ENCODE measurements at regions of chr13 and their contacts with region 1.

Region 1: DNA sequence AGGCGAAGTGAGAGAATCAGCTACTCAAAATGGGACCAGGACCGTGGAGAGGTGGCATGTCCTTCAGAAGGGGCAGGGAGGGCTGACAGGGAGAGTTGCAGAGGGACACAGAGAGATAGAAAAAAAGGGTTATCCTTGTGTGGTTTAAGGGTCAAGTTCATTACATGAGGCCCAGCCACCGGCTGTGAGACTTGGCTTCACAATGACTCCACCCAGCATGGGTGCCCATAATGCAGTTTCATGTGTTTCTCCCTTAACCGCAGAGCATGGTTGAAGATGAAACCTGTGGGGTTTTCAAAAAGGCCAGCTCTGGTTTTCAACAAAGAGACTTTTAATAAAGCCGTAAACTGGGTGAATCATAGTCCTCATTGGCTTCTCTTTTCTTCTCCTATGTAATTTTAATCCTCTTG is 164.6 kb downstream of the KLF5 start:
- DNase-seq: peak; percentile 70
- H3K4me3 Mint-ChIP-seq: no peak overlapping the region
- H3K27ac Mint-ChIP-seq: no peak overlapping the region
- H3K4me1 Mint-ChIP-seq: peaks cover 24% of the 10 kb centered on the region
- H3K27me3 Mint-ChIP-seq: peaks cover 4% of the 10 kb centered on the region

Region 2: DNA sequence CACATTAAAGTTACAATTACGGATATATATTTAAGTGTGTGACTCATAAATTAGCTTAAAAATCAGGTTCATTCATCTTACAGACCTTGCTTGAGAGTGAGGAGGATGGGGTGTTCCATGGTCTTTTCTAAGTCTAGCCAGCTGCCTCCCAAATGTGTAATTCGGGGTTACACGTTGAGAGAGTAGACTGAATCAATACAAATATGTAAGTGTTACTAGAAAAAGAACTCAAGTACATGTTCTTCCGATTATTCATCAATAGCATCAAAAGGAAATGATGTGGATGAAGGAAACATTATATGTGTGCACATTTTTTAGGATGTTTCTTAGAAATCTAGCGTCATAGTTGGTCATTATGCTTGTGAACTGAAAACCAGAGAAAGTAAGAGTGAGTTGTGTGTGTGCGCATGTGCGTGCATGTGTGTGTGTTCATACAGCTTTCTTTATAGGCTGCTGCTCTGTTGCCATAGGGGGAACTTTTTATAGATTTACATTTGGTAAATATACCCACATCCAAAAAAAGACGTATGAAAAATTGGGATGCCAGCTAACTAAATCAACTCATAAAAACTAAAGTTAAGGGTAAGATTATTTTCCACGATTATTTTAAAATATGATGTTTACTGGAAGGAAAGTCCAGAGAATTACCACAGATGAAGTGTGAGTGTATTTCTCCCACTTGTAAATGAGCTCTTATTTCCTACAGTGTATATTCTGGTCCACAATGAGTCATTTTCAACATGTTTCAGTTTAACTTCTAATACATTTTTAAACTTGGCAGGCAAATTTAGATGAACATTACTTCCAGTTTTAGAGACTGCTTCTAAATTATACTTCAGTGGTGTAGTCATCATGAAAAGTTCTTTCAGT is 359.0 kb before region 1 on chr13:
- CTCF ChIA-PET with region 1: no interaction called
- POLR2A ChIA-PET with region 1: no interaction called
- intact Hi-C with region 1: loop called (anchors 2 kb)
- DNase-seq: peak; percentile 51
- H3K4me3 Mint-ChIP-seq: peak overlapping the region; percentile 17
- H3K27ac Mint-ChIP-seq: peak overlapping the region; percentile 83
- H3K4me1 Mint-ChIP-seq: peaks cover 20% of the 10 kb centered on the region
- H3K27me3 Mint-ChIP-seq: no peaks in the 10 kb centered on the region

Region 3: DNA sequence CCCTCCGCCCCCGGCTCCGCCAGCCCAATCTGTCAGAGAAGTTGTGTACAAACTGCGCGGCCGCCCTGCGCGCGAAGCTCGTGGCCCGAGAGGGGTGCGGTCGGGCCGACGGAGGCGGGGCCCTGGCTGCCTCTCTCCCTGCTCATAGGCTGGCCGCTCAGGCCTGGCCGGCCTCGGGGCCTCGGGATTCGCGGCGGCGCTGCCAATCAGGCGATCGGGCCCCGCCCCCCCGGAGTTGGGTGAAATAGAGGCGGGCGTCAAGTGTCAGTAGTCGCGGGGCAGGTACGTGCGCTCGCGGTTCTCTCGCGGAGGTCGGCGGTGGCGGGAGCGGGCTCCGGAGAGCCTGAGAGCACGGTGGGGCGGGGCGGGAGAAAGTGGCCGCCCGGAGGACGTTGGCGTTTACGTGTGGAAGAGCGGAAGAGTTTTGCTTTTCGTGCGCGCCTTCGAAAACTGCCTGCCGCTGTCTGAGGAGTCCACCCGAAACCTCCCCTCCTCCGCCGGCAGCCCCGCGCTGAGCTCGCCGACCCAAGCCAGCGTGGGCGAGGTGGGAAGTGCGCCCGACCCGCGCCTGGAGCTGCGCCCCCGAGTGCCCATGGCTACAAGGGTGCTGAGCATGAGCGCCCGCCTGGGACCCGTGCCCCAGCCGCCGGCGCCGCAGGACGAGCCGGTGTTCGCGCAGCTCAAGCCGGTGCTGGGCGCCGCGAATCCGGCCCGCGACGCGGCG is 164.5 kb before region 1 on chr13 and contains the start of gene KLF5:
- CTCF ChIA-PET with region 1: no interaction called
- POLR2A ChIA-PET with region 1: no interaction called
- intact Hi-C with region 1: loop called (anchors 1 kb)
- DNase-seq: peak; percentile 97
- H3K4me3 Mint-ChIP-seq: peak within 1 kb of the TSS; percentile 75
- H3K27ac Mint-ChIP-seq: no peak within 1 kb of the TSS
- H3K4me1 Mint-ChIP-seq: peaks cover 17% of the 10 kb centered on the region
- H3K27me3 Mint-ChIP-seq: peaks cover 16% of the 10 kb centered on the region
- total RNA-seq, gene KLF5: 3.3 to 4.2 TPM

Region 4: DNA sequence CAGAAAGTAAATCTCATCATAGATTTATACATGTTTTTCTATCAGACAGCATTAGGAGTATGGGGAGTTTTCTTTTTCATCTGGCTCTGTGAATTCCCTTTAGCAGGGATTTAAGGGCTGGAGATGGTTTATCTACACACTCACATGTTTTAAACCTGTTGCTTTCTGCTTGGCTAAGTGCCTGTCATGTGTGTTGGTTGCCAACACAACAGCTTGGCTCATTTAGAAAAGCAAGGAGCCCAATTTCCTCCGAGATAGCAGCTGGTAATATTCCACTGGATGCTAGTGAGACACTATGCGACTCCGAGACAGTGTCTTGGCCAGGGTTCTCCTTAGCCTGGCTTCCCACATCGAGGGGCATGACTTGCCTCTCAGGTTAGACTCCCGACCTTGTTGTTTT is 81.3 kb before region 1 on chr13:
- CTCF ChIA-PET with region 1: no interaction called
- POLR2A ChIA-PET with region 1: no interaction called
- intact Hi-C with region 1: no loop called
- DNase-seq: no peak
- H3K4me3 Mint-ChIP-seq: no peak overlapping the region
- H3K27ac Mint-ChIP-seq: no peak overlapping the region
- H3K4me1 Mint-ChIP-seq: no peaks in the 10 kb centered on the region
- H3K27me3 Mint-ChIP-seq: no peaks in the 10 kb centered on the region

Region 5: DNA sequence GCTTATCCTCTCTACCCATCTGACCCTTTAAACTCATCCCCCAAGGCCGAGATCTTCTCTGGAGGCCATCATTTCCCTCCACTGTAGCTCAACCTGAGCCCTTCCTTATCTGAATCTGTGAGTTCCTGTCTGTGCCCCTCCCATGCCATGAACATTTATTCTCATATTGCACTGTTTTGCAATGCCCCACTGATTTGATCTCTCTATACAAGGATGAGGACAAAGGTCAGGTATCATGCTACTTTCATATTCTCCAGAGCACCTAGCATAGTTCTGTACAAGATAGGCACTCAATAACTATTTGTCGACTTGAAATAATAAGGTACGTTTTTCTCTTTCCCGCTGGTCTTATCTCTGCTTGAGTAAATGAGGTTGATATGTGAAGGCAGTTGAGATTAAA is 29.1 kb before region 1 on chr13:
- CTCF ChIA-PET with region 1: no interaction called
- POLR2A ChIA-PET with region 1: no interaction called
- intact Hi-C with region 1: no loop called
- DNase-seq: no peak
- H3K4me3 Mint-ChIP-seq: no peak overlapping the region
- H3K27ac Mint-ChIP-seq: no peak overlapping the region
- H3K4me1 Mint-ChIP-seq: no peaks in the 10 kb centered on the region
- H3K27me3 Mint-ChIP-seq: peaks cover 12% of the 10 kb centered on the region

Region 6: DNA sequence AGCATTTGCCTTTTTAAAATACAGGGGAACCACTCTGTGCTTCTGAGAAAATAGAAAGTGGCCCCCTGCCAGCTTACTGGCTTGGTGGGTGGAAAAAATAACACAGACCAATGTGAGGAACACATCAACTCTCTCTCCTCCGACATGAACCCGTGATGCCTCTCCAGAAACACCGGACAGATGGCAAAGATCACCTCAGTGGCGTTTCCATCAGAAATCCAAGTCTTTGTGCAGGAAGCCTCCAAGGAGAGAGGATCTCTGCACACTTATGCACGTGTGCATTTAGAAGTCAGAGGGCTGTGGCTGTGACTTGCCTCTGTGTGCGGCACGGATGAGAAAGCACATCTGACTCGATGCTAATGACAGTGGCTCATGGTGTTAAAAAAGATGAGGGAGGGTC is 1023.1 kb after region 1 on chr13:
- CTCF ChIA-PET with region 1: no interaction called
- POLR2A ChIA-PET with region 1: no interaction called
- intact Hi-C with region 1: loop called (anchors 10 kb)
- DNase-seq: peak; percentile 47
- H3K4me3 Mint-ChIP-seq: peak overlapping the region; percentile 58
- H3K27ac Mint-ChIP-seq: peak overlapping the region; percentile 40
- H3K4me1 Mint-ChIP-seq: peaks cover 95% of the 10 kb centered on the region
- H3K27me3 Mint-ChIP-seq: no peaks in the 10 kb centered on the region